ENCODE measurements at regions of chr20 and their contacts with region 1.

Region 1: DNA sequence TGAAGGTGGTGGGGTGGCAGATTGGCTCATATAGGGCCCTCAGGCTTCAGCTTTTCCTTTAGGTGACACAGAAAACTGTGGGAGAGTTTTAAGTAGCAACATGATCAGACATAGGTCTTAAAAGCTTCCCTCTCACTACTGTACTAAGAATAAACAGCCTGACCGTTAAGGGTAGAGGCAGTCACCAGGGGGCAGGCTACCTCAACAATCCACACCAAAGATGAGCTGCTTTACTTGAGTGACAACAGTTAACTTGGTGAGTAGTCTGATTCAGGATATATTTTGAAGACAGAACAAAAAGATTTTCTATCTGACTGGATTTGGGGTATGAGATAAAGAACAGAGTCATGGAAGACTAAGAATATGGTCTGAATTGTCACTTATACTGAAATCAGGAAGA is 193.1 kb upstream of the SHLD1 start:
- DNase-seq: peak; percentile 62
- H3K4me3 ChIP-seq: no peak overlapping the region
- H3K27ac ChIP-seq: no peak overlapping the region
- H3K4me1 ChIP-seq: peaks cover 0 to 15% (median under 1%) of the 10 kb centered on the region in 4 donors
- H3K27me3 ChIP-seq: no peaks in the 10 kb centered on the region
- CTCF ChIP-seq: peak; percentile 43 to 55 (median 45)
- EP300 ChIP-seq: no peak
- POLR2A ChIP-seq: no peak

Region 2: GRCh38 chr20:4956200-4956810 is 600.8 kb before region 1 on chr20:
- in situ Hi-C with region 1: no loop called
- intact Hi-C with region 1: no loop called
- DNase-seq: no peak
- H3K4me3 ChIP-seq: no peak overlapping the region
- H3K27ac ChIP-seq: no peak overlapping the region
- H3K4me1 ChIP-seq: no peaks in the 10 kb centered on the region
- H3K27me3 ChIP-seq: no peaks in the 10 kb centered on the region
- CTCF ChIP-seq: peak; percentile 75 to 85 (median 77)
- EP300 ChIP-seq: no peak
- POLR2A ChIP-seq: no peak

Region 3: GRCh38 chr20:5933802-5934436 is 376.8 kb after region 1 on chr20:
- in situ Hi-C with region 1: loop called in 1 of 4 experiments (anchors 25 kb)
- intact Hi-C with region 1: no loop called
- DNase-seq: no peak
- H3K4me3 ChIP-seq: no peak overlapping the region
- H3K27ac ChIP-seq: no peak overlapping the region
- H3K4me1 ChIP-seq: no peaks in the 10 kb centered on the region
- H3K27me3 ChIP-seq: peaks cover 4% of the 10 kb centered on the region
- CTCF ChIP-seq: peak in 2 of 5 experiments; percentile 5 to 10
- EP300 ChIP-seq: no peak
- POLR2A ChIP-seq: no peak

Measured in transverse colon (tissue), 4 donors.